Right ventricle myocardium inferior (tissue), 1 donor: ENCODE measurements at regions of chr18 and their contacts with region 1.

Region 1: DNA sequence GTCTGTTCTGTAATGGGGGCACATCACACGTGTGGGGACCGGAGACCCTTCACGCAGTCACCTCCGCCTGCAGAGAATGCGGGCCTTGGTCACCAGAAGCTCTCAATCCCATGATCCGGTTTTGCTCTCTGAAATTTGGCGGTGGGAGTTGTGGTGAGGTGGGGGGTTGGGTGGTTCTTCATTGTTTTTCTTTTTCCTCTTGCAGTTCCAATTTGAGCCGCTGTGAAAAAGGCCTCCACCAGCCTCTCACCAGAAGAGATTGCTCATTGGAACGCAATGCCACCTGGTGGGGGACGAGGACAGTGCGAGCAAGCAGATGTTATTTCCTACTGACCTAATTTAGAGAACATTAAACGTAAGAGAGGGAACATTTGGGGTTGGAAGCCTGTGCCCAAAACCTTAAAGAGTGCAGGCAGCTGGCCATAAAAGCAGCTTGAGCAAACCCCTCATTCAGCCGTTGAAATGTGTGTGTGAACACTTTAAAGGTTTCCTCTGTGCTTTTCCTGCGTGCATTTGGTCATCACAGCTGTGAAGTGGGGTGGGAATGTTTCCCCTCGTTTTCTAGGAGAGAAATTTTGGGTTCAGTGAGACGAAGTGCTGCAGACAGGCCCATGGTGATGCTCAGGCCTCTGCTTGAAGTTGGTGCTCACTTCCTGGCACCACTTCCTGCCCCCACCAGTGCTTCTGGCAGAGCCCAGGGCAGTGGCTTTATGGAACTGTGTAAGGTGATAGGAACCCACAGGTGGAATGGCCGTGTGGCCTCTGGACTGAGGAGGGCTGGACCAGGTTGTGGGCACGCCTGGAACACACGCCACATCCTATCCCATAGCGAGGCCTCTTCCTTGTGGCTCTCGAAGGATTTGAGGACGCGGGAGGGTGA is 61.7 kb downstream of the ZCCHC2 start:
- DNase-seq: peak; percentile 89
- ATAC-seq: peak; percentile 88

Region 2: DNA sequence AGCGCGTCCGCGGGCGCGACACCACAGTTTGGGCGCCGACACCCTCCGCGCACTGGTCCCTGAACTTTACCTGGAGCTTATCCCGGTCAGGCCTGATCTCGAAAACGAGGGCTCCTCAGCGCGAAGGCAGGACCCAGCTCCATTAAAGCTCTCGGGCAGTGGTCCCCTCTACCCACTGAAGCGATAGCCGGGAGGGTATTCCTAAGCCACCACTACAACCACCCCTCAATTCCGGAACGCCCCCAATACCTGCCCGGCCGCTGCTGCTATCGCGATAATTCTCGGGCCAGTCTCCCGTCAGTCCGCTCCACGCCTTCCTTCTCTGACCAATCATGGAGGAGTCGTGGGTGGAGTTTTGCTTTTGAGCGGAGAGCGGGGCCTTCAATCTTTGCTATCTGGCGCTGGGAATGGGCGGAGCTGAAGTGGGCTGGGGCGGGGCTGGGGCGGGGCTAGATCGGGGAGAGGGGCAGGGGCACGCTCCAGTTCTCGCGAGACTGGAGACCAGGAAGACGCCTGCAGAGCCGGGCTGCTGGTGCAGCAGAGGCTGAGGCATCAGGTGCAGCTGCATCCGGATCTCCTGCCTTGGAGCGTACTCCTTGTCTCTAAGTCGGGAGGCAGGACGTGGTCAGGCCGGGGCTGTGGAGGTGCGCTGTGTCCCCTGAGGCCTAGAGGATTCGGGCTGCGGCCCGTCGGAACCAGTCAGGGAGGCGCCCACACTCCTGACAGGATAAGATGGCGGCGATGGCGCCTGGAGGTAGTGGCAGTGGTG is 397.5 kb before region 1 on chr18 and contains the starts of genes PIGN and RELCH:
- intact Hi-C with region 1: loop called (anchors 5 kb)
- DNase-seq: peak; percentile 95
- ATAC-seq: peak; percentile 99
- total RNA-seq, gene PIGN: 21.0 TPM
- total RNA-seq, gene RELCH: 11.1 TPM

Region 3: DNA sequence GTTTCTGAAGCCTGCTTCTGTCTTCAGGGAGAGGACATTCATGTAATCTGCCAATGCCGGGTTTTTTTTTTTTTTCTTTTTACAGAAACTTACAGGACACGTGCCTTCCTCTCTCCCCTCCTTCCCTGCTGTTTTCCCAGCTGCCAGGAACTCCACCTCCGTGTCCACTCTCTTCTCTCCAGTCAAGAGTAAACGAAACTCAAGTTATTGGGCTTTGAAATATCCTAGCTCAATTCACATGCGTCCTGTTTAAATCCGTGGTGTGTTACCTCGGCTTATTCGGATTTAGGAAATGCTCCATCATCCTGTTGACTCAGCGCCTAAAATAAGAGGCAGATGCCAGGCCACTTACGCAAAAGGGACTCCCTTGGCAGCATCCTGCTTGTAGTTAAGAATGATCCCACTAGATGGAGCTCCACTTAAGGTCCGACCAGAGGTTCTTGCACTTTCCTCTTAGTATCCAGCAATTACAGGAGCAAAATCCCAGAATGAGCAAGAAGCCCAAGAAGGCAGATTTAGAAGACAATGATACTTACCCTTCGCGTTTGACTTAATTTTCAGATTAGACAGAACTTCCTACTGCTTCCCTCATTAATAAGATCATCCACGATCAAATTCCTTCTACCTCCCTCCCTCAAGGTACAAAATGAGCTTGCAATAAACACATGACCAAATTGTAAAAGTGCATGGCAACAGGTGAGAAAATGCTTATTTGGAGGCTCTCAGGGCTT is 158.9 kb before region 1 on chr18:
- intact Hi-C with region 1: loop called (anchors 2 kb)
- DNase-seq: no peak
- ATAC-seq: peak; percentile 93

Region 4: GRCh38 chr18:62464266-62464665 is 120.2 kb before region 1 on chr18:
- intact Hi-C with region 1: no loop called
- DNase-seq: no peak
- ATAC-seq: no peak

Region 5: DNA sequence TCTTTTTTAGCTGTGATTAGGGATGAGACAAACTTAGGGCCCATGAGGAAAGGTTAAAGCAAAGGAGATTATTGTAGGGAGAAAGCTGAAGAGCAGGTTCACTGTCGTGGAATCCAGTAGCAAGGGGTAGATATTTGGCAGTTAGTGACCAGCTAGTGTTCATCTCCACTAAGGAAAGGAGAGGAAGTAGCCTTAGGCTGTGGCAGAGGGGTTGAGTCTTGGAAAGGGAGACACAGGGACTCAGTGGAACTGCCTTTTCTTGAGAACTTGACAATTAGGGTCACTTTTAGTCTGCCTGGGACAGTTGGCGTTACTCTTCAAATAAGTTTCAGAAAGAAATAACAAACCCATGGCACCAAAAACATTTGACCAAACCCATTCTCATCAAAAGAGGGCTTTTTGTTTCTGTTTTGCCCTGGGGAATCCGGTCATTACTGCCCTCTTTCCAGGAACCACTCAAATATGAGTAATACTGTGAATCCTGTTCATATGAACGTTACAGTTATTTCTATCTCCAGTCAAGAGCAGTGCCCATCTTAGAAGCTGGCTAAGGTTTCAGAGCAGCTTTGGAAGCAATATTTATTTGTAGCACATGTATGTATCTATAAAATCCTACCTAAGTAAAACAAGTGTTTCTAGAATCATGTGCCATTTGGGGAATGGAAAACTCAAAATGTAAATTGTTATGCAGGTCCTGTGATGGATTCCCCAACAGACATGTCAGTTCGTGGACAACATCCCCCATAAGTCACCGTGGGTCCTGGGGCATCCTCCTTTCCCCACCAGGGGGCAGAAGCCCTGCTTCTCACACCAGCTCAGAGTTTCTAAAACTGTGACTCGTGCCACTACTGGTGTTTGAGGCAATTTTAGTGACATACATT is 53.6 kb after region 1 on chr18:
- intact Hi-C with region 1: no loop called
- DNase-seq: no peak
- ATAC-seq: no peak

Region 6: DNA sequence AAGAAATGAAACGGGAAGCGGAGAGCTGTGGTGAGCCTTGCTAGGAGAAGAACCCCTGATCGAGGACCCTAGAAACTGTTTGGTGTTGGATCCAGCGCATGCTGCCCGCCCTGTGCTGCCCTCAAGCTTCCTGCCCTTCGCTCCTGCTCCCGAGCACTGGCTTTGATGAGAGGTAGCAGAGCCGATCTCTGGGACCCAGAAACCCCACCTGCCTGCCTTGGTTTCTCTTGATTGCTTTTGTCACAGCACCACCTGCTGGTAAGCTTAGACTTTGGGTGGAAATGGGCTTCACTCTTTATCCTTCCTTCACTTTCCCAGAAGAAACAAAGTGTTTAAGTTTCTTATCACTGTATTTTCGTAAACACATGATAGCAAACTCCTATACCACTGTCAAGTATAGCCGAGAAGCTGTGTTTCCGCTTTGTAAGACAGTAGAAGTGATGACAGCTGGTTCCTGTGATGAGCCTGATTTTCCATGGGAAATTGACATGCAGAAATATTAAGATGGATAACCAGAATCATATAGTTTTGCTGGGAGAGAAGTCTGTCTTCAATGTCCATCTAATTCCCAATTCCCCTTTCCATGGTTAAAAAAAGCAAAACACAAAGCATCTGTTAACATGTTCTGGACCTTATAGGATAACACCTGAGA is 398.2 kb after region 1 on chr18:
- intact Hi-C with region 1: loop called (anchors 2 kb)
- DNase-seq: no peak
- ATAC-seq: peak; percentile 80